CD4-positive, alpha-beta T cell (primary cell): ENCODE measurements at regions of chr18 and their contacts with region 1.

Region 1: GRCh38 chr18:50266248-50266704 is at the start of gene CFAP53:
- DNase-seq: peak in 13 of 14 experiments; percentile 54 to 92 (median 80)
- ATAC-seq: peak; percentile 77
- H3K4me3 ChIP-seq: peak within 1 kb of the TSS; percentile 66
- H3K4me3 Mint-ChIP-seq: peak within 1 kb of the TSS; percentile 93
- H3K27ac ChIP-seq: peak within 1 kb of the TSS; percentile 13 to 64
- H3K27ac Mint-ChIP-seq: peak within 1 kb of the TSS; percentile 45
- H3K4me1 ChIP-seq: peaks cover 25% of the 10 kb centered on the region
- H3K4me1 Mint-ChIP-seq: peaks cover 30% of the 10 kb centered on the region
- H3K27me3 ChIP-seq: no peaks in the 10 kb centered on the region
- H3K27me3 Mint-ChIP-seq: no peaks in the 10 kb centered on the region
- CTCF ChIP-seq: no peak
- total RNA-seq, gene CFAP53: 0.33 to 0.47 TPM

Region 2: DNA sequence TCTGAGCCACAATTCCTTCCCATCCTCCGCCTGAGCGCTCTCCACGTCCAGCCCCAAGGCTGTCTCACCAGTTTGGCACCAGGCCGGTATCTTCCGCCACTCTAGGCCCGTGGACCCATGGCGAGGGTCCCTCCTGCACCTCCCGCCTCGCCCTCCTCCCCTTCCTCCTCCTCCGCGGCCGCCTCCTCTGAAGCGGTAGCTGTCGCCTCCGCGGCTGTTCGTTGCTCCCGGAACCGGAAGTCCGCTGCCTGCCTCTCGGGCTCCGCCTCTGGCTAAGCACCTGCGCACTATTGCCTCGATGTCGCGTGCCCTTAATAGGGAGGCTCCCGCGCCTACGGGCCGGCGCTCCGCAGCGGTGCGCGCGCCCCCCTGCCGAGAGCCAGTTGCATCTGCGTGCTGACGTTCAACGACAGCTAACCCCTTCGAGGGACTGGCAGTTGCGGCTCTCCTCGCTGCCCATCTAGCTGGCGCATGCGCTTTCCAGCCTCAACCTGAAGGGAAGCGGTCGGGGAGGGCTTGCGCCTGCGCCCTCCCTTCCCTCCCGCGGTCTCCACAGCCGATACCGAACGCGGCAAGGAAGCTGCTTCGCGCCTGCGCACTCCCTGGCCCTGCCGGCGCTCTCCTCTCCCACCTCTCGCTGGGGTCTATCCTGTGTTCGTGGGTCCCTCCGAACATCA is 15.2 kb after region 1 on chr18 and contains the start of gene MBD1:
- CTCF ChIA-PET with region 1: interaction called, 6 read pairs
- POLR2A ChIA-PET with region 1: interaction called, 42 read pairs
- intact Hi-C with region 1: loop called (anchors 1 to 2 kb)
- DNase-seq: peak; percentile 93 to 100 (median 96)
- ATAC-seq: peak; percentile 90
- H3K4me3 ChIP-seq: peak within 1 kb of the TSS; percentile 93
- H3K4me3 Mint-ChIP-seq: peak within 1 kb of the TSS; percentile 100
- H3K27ac ChIP-seq: peak within 1 kb of the TSS; percentile 84 to 90
- H3K27ac Mint-ChIP-seq: peak within 1 kb of the TSS; percentile 98
- H3K4me1 ChIP-seq: peaks cover 31% of the 10 kb centered on the region
- H3K4me1 Mint-ChIP-seq: peaks cover 38% of the 10 kb centered on the region
- H3K27me3 ChIP-seq: no peaks in the 10 kb centered on the region
- H3K27me3 Mint-ChIP-seq: no peaks in the 10 kb centered on the region
- CTCF ChIP-seq: no peak
- total RNA-seq, gene MBD1: 103 to 107 TPM